Activated naive CD4-positive, alpha-beta T cell treated with anti-CD3 and anti-CD28 coated beads for 36 hours (primary cell): ENCODE measurements at regions of chrX and their contacts with region 1.

Region 1: GRCh38 chrX:17441965-17442364 is 67.0 kb downstream of the NHS start:
- DNase-seq: no peak
- H3K4me3 Mint-ChIP-seq: no peak overlapping the region
- H3K27ac Mint-ChIP-seq: no peak overlapping the region
- H3K4me1 Mint-ChIP-seq: peaks cover 7% of the 10 kb centered on the region
- H3K27me3 Mint-ChIP-seq: no peaks in the 10 kb centered on the region

Region 2: DNA sequence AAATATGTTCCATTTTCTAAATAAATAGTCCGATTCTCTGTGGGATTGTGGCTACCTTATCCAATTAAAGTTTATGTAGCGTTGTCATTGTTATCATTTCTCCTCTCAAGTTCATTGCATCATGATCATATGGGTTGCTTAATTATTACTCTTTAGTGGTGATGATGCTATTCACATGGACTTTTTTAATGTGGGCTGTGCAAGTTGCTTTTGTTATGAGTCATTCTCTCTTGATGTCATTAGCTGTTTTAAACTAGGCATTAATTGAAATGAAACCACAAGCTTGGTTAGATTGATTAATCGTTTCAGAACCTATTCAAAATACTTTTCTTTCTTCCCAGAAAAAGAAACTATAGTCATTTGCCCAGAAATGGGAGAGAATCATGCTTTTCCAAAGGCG is 28.7 kb before region 1 on chrX:
- CTCF ChIA-PET with region 1: no interaction called
- intact Hi-C with region 1: loop called (anchors 1 kb)
- DNase-seq: no peak
- H3K4me3 Mint-ChIP-seq: no peak overlapping the region
- H3K27ac Mint-ChIP-seq: peak overlapping the region; percentile 7
- H3K4me1 Mint-ChIP-seq: peaks cover 28% of the 10 kb centered on the region
- H3K27me3 Mint-ChIP-seq: peaks cover 15% of the 10 kb centered on the region

Region 3: GRCh38 chrX:17553469-17553868 is 111.5 kb after region 1 on chrX:
- CTCF ChIA-PET with region 1: no interaction called
- intact Hi-C with region 1: no loop called
- DNase-seq: no peak
- H3K4me3 Mint-ChIP-seq: no peak overlapping the region
- H3K27ac Mint-ChIP-seq: peak overlapping the region; percentile 19
- H3K4me1 Mint-ChIP-seq: peaks cover 22% of the 10 kb centered on the region
- H3K27me3 Mint-ChIP-seq: no peaks in the 10 kb centered on the region